PC-3 (cell line): ENCODE measurements at regions of chr19 and their contacts with region 1.

Region 1: GRCh38 chr19:972281-972680 is 11.9 kb upstream of the WDR18 start:
- DNase-seq: no peak
- ATAC-seq: no peak
- H3K4me3 ChIP-seq: no peak overlapping the region
- H3K27ac ChIP-seq: no peak overlapping the region
- H3K4me1 ChIP-seq: no peaks in the 10 kb centered on the region
- H3K27me3 ChIP-seq: no peaks in the 10 kb centered on the region
- CTCF ChIP-seq: no peak

Region 2: GRCh38 chr19:1074544-1075283 is 102.4 kb after region 1 on chr19:
- CTCF ChIA-PET with region 1: no interaction called
- POLR2A ChIA-PET with region 1: no interaction called
- intact Hi-C with region 1: no loop called
- DNase-seq: peak; percentile 72
- ATAC-seq: peak; percentile 63
- H3K4me3 ChIP-seq: peak overlapping the region; percentile 61
- H3K27ac ChIP-seq: no peak overlapping the region
- H3K4me1 ChIP-seq: no peaks in the 10 kb centered on the region; the same call in 1 of the 2 replicates
- H3K27me3 ChIP-seq: no peaks in the 10 kb centered on the region
- CTCF ChIP-seq: no peak

Region 3: DNA sequence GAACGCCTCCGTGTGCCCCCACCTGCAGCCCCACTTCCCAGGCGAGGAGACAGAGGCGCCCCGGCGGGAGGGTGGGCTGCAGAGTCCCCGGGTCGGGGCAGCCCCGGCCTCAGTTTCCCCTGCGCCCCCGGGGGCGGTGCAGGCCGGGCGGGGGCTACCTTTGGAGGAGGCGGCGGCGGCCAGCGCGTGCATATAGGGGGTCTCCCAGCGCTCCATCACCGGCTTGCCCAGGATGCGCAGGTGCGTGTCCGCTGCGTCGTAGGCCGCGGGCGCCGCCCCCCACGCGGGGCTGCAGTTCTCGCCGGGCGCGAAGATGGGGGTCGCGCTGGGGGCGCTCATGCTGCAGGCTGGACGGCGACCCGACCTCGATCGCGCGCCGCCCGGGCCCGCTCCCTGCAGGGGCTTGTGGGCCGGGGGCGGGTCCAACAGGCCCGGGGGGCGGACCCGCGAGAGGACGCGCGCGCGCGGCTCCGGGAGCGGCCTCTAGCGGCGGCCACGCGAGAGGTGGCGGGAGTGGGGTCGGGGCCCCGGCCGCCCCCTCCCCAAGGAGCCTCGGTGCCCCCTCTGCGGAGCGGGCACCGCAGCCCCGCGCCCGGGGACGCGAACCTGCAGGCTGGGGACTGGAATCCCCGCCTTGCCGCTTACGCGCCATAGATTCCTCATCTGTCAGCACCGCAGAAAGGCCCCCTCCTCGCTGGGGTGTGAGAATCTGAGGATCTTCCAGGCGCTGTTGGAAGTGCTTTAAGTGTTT is 429.0 kb after region 1 on chr19 and contains the start of gene GAMT:
- CTCF ChIA-PET with region 1: no interaction called
- POLR2A ChIA-PET with region 1: interaction called, 18 read pairs
- intact Hi-C with region 1: no loop called
- DNase-seq: peak; percentile 43
- ATAC-seq: peak; percentile 69
- H3K4me3 ChIP-seq: peak within 1 kb of the TSS; percentile 82
- H3K27ac ChIP-seq: no peak within 1 kb of the TSS
- H3K4me1 ChIP-seq: peaks cover 2% of the 10 kb centered on the region; the same call in 1 of the 2 replicates
- H3K27me3 ChIP-seq: no peaks in the 10 kb centered on the region
- CTCF ChIP-seq: peak; percentile 51
- total RNA-seq, gene GAMT: 74.9 and 75.6 TPM in 2 replicates